MCF 10A (cell line): ENCODE measurements at regions of chr4 and their contacts with region 1.

Region 1: DNA sequence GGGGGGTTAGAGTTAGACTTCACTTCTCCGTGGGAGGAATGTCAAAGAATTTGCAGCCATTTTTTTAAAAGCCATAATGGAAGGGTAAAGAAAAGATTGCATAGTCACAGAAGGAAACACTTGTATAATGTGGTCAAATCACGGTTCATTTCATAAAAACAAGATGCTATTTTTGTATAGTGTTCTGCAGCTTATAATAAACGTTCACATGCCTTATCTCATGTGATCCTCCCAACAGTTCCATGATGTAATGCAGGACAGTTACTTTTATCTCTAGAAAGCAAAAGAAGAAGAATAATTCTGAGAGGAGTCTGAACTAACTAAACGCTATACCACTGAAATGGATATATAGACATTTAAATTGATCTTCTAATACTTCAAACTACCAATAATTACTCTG is 71.3 kb upstream of the CAMK2D start:
- DNase-seq: no peak
- H3K4me3 Mint-ChIP-seq: no peak overlapping the region
- H3K27ac Mint-ChIP-seq: no peak overlapping the region
- H3K4me1 Mint-ChIP-seq: peaks cover 8% of the 10 kb centered on the region
- H3K27me3 Mint-ChIP-seq: no peaks in the 10 kb centered on the region
- CTCF ChIP-seq: no peak

Region 2: DNA sequence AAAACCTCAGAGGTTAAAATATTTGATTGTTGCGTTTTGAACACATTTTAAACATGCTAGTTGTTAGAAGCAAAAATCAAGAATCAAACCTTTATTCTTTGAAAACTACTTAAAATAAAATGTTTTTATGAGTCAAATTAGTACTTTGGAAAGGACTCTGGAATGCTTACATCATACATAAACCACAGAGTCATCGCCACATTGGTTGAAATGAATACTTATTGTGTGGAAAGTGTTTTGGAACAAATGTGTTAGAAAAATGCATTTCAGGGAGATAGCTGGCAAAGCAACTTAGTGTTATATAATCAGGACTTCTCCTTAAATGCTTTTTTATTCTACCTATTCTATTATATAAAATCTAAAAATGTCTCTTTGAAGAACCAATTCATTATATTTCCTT is 21.9 kb before region 1 on chr4:
- CTCF ChIA-PET with region 1: interaction called, 4 read pairs
- POLR2A ChIA-PET with region 1: interaction called, 3 read pairs
- intact Hi-C with region 1: loop called (anchors 2 kb)
- DNase-seq: peak; percentile 38
- H3K4me3 Mint-ChIP-seq: no peak overlapping the region
- H3K27ac Mint-ChIP-seq: no peak overlapping the region
- H3K4me1 Mint-ChIP-seq: peaks cover 8% of the 10 kb centered on the region
- H3K27me3 Mint-ChIP-seq: no peaks in the 10 kb centered on the region
- CTCF ChIP-seq: no peak

Region 3: DNA sequence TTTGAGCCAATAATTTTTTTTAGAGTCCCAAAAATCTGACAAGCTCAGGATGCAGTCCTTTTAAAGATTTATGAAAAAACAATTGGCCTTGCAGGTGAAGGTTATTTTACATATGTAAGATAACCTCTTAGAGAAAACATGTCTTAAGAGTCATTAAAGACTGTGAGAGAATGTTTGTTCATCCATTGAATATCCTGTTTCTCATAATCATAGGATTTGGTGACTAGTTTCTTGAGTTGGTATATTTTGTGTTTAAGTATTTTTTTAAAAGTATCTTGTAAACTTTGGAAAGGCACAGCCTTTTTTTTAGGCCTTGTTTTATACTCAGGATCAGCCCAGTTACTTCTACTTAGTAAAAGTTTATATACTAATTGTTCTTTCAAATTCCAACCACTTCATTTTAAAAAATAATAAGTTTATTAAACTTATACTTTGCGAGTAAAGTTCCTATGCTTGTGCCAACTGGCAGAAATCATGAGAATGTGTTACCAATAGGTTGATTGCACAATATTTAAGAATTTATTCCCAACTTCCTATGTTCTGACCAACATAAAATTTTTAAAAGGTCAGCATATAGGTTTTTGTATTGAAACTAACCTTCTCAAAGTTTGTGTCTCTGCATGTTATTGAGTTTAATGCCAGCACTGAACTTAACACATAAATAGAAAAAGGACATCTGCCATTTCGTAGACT is 186.6 kb after region 1 on chr4:
- CTCF ChIA-PET with region 1: no interaction called
- POLR2A ChIA-PET with region 1: no interaction called
- intact Hi-C with region 1: no loop called
- DNase-seq: peak; percentile 48
- H3K4me3 Mint-ChIP-seq: no peak overlapping the region
- H3K27ac Mint-ChIP-seq: no peak overlapping the region
- H3K4me1 Mint-ChIP-seq: peaks cover 28% of the 10 kb centered on the region
- H3K27me3 Mint-ChIP-seq: no peaks in the 10 kb centered on the region
- CTCF ChIP-seq: no peak